ENCODE measurements at regions of chrX and their contacts with region 1.

Region 1: DNA sequence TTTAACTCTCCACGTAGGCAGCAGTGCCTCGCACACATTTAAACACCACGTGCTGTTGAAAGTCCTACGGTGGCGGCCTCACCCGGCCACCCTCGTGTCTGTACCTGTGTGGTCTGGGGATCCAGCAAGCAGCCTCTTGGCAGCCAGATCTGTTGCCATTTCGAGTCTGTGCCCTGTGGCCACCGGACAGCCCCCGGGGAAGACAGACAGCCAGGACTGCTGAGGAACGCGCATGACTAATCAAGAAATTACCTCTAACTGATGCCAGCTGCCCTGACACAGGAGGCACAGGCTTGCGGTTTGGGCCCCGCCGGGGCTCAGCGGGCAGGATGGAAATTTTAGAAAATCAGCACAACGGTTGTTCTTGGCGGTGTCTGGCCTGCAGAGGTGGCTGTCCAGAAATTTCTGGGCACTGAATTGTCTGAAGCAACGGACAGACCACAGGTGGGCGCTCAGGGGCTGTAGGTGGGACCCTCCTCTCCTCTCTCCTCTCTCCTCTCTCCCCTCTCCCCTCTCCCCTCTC is 15.6 kb upstream of the ASMTL start:
- DNase-seq: peak; percentile 49
- ATAC-seq: peak; percentile 7
- H3K4me3 ChIP-seq: no peak overlapping the region
- H3K27ac ChIP-seq: no peak overlapping the region
- H3K4me1 ChIP-seq: no peaks in the 10 kb centered on the region
- H3K27me3 ChIP-seq: peaks cover 14% of the 10 kb centered on the region
- CTCF ChIP-seq: no peak

Region 2: DNA sequence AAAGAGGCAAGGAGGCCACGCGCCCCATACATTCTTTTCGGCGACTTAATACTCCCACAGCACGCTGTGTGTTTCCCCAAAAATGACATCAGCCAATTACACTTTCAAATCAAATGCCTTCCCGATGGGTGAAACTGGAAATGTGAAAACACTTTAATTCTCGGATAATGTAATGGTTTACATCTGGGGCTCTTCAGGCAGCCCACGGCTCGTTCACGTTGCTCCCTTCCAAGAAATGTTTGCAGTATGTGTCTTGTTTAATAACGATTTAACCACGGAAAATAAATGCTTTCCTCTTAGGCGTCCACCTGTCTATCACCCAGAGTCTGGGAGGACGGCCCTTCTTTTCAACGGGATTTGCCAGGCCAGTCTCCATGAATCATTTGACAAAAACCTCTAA is 565.2 kb before region 1 on chrX:
- intact Hi-C with region 1: no loop called
- DNase-seq: no peak
- ATAC-seq: no peak
- H3K4me3 ChIP-seq: no peak overlapping the region
- H3K27ac ChIP-seq: no peak overlapping the region
- H3K4me1 ChIP-seq: no peaks in the 10 kb centered on the region
- H3K27me3 ChIP-seq: no peaks in the 10 kb centered on the region
- CTCF ChIP-seq: no peak

Region 3: DNA sequence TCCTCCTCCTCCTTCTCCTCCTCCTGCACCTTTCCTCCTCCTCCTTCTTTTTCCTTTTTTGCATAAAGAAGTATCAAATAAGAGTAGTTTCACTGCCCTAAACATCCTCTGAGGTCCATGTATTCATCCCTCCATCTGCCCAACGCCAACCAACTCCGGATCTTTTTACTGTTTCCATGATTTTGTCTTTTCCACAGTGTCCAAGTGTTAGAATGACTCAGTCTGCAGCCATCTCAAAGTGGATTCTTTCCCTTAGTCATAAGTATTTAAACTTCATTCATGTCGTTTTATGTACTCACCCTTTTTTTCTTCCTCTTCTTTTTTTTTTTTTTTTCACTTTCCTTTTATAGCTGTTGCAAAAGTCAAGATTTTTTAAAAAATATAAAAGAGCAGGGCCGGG is 186.8 kb before region 1 on chrX:
- intact Hi-C with region 1: no loop called
- DNase-seq: no peak
- ATAC-seq: no peak
- H3K4me3 ChIP-seq: no peak overlapping the region
- H3K27ac ChIP-seq: no peak overlapping the region
- H3K4me1 ChIP-seq: no peaks in the 10 kb centered on the region
- H3K27me3 ChIP-seq: no peaks in the 10 kb centered on the region
- CTCF ChIP-seq: no peak

Region 4: DNA sequence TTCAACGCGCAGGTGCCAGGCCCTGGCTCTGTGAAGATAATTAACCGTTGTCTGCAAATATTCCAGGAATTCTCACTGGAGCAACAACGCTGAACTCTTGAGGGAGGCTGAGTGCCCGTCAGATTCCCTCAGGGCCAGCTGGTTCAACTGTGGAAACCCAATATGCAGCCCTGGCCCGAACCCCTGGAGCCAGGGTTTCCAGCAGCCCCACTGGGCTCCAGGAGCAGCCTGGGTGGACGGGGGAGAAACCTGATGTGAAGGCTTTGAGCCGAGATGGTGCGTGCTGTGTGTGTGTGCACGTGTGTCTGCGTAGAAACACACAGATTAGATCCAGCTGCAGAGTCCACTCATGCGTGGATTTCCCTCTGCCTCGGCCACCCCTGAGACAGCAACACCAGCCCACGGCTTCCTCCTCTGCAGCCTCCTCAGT is 57.0 kb before region 1 on chrX:
- intact Hi-C with region 1: no loop called
- DNase-seq: peak; percentile 40
- ATAC-seq: peak; percentile 26
- H3K4me3 ChIP-seq: no peak overlapping the region
- H3K27ac ChIP-seq: no peak overlapping the region
- H3K4me1 ChIP-seq: no peaks in the 10 kb centered on the region
- H3K27me3 ChIP-seq: no peaks in the 10 kb centered on the region
- CTCF ChIP-seq: no peak

Region 5: DNA sequence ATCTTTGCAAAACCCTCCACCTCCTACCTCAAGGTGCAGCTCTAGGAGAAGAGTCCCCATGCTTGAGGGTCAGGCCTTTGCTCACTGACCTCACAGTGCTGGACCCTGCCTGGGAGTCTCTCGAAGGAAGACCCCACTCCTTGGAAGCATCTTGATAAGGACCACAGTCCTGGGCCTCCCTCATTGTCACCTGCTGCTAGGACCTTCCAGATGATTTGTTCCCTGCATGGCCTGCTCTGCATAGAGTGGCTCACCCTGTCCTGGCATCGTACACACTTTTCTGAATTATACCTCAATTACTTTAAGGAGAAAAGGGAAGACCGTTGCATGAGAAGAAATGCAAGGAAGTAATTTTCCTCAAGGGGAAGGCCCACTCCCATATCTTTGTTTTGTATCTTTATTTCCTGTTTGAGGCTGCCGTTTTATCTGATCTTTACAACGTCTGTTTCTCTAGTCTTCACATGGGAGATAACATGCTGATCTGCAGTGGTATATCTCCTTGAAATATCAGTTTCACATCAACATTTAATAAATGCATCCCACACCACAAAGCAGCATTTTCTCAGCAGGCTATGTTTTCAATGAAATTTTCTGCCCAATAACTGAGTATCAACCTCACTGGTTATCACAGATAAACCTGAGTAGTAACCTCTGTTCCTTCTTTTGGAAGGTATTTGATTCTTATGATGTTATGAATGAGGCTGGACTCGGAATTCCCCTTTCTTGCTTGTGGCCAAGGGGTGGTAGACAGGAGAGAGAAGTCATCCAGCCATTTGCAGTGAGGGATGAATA is 108.1 kb after region 1 on chrX:
- intact Hi-C with region 1: loop called (anchors 10 kb)
- DNase-seq: peak; percentile 23
- ATAC-seq: no peak
- H3K4me3 ChIP-seq: no peak overlapping the region
- H3K27ac ChIP-seq: no peak overlapping the region
- H3K4me1 ChIP-seq: no peaks in the 10 kb centered on the region
- H3K27me3 ChIP-seq: no peaks in the 10 kb centered on the region
- CTCF ChIP-seq: no peak

Region 6: GRCh38 chrX:1591102-1591900 is 123.0 kb after region 1 on chrX and contains the start of gene AKAP17A:
- intact Hi-C with region 1: no loop called
- DNase-seq: peak; percentile 98
- ATAC-seq: peak; percentile 96
- H3K4me3 ChIP-seq: peak within 1 kb of the TSS; percentile 79
- H3K27ac ChIP-seq: peak within 1 kb of the TSS; percentile 79
- H3K4me1 ChIP-seq: peaks cover 15% of the 10 kb centered on the region
- H3K27me3 ChIP-seq: no peaks in the 10 kb centered on the region
- CTCF ChIP-seq: peak; percentile 5
- total RNA-seq, gene AKAP17A: 46.3 TPM

Measured in upper lobe of right lung (tissue), 1 donor.